Heart left ventricle (tissue), 16 donors: ENCODE measurements at regions of chr9 and their contacts with region 1.

Region 1: DNA sequence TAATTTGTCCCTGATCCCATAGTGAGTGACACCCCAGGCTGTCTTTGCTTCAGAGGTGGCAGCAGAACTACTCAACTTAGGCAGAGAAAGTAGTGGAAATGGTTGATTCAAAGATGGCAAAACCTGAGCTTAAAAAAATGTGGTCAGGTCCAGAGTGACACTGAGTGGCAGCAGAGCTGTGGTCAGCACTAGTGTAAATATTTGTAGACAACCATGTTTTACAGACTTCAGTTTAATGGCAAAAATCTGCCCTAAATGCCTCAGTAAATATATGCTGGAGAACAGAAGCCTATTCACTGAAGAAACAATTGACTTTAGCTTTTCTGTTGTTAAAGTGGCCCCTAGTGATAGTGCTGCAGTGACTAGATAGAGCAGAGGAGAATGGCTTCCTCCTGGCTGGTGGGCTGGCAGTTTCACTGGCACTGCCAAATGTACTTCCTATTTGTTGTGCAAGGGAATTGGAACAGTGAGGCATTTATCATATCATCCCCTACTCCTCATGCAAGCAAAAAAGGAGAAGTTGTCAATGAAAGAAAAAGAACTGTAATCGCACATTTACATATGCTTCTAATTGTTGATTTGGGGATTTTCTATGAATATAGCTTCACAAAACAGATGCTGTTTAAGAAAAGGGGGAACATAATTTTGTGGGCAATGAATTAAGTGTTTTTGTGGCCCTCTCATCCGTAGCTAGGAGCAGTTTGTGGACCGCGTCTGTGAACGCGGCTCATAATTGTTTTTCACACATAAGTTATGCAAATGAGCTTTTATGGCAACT is 12.0 kb downstream of the PBX3 start:
- DNase-seq: peak in 4 of 5 donors; percentile 10 to 33 (median 26)
- ATAC-seq: peak; percentile 30 to 88 (median 63)
- H3K4me3 ChIP-seq: peak overlapping the region in 9 of 12 donors; percentile 16 to 51 (median 30)
- H3K27ac ChIP-seq: peak overlapping the region in 3 of 12 donors; percentile 25 to 64 (median 34)
- H3K4me1 ChIP-seq: peaks cover 5 to 85% (median 47%) of the 10 kb centered on the region in 12 donors
- H3K27me3 ChIP-seq: no peaks in the 10 kb centered on the region
- CTCF ChIP-seq: no peak
- POLR2A ChIP-seq: no peak

Region 2: DNA sequence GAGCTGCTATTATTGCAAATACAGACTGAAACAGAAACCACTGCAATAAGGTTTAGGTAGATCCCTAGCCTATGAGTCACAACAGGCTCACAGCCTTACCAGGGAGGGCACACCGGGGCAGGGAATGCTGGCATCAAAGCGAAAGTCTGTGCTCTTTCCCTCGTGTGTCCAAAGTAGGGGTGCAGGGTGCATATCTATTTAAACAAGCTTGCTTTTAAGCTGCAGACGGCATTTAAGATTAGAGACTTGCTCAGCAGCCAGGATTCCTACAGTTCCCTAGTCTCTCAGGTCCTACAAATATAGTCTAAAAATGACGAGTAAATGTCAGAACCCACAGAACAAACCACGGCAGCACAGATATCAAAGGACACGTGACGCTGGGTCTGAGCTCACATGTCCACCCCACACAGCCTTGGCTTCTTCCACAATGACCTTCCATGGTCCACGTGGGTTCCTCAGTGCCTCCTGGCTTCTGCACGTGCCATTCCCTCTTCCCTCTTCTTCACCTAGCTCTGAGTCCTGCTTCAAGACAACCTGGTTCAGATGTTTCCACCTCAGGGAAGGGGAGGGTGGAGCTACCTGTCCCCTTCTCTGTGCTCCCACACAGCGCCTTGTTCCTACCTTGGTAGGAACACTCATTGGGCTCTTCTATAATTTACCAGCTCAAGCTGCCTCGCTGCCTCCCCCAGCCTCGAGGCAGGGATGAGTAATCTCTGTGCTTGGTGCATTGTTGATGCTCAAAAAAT is 245.3 kb before region 1 on chr9:
- intact Hi-C with region 1: no loop called
- DNase-seq: peak in 4 of 5 donors; percentile 29 to 71 (median 44)
- ATAC-seq: peak; percentile 78 to 94 (median 88)
- H3K4me3 ChIP-seq: peak overlapping the region in 6 of 12 donors; percentile 0 to 38 (median 24)
- H3K27ac ChIP-seq: peak overlapping the region in 11 of 12 donors; percentile 30 to 82 (median 63)
- H3K4me1 ChIP-seq: peaks cover 0 to 49% (median 23%) of the 10 kb centered on the region in 12 donors
- H3K27me3 ChIP-seq: no peaks in the 10 kb centered on the region
- CTCF ChIP-seq: no peak
- POLR2A ChIP-seq: no peak

Region 3: DNA sequence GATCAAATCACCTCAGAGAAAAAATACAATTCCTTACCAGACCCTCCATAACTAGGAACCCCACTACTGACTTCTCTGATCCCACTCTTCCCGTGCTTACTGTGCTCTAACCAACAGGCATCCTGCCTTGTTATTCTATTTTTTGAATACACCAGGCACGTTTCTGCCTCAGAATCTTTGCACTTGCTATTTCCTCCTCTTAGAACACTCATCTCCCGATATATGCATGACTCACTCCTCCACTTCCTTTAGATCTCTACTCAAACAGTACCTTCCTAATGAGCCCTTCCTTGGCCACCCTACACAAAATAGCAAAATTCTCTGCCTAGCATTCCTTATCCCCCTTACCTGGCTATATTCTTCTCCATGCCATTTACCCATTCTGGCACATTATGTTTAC is 96.0 kb before region 1 on chr9:
- intact Hi-C with region 1: no loop called
- DNase-seq: no peak
- ATAC-seq: no peak
- H3K4me3 ChIP-seq: no peak overlapping the region
- H3K27ac ChIP-seq: no peak overlapping the region
- H3K4me1 ChIP-seq: peaks cover 0 to 15% (median 0%) of the 10 kb centered on the region in 12 donors
- H3K27me3 ChIP-seq: no peaks in the 10 kb centered on the region
- CTCF ChIP-seq: no peak
- POLR2A ChIP-seq: no peak

Region 4: DNA sequence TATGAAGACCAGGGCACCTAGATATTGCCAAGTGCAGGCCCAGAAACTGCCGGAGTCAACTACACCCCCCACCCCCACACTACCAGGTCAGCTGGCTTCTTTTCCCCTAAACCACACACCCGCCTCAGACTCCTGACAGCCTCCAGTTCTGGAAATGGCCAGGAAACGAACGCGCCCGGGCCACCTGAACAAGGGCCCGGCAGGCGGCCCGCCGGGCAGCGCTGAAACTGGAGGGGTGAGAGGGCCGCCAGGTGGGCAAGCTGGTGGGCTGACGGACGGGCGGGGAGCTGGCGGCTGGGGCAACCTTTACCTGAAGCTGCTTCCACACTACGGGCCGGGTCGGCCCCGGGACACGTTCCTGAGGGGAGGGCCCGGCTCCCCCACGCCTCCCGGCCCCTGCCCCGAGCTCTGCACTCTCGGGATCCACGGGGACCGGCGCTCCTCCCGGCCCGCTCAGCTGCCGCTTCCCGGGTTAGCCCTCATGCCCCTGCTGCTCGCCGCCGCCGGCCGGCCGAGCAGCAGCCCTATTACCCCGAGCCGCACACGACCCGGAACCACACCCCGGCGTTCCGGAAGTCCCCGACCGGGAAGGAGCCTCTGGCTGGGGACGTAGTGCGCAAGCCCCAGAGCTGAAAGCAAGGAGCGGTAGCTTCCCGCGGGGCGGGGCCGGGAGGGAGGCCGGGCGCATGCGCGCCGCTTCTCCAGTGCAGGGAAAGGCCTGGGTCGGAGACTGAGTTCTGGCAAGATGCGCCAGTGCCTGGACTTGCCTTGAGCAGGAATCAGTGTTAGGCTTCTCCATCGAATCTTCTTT is 52.3 kb before region 1 on chr9 and contains the start of gene MAPKAP1:
- intact Hi-C with region 1: no loop called
- DNase-seq: peak; percentile 96 to 99 (median 99)
- ATAC-seq: peak; percentile 100
- H3K4me3 ChIP-seq: peak within 1 kb of the TSS; percentile 68 to 100 (median 97)
- H3K27ac ChIP-seq: peak within 1 kb of the TSS in 11 of 12 donors; percentile 35 to 88 (median 80)
- H3K4me1 ChIP-seq: peaks cover 0 to 28% (median 20%) of the 10 kb centered on the region in 12 donors
- H3K27me3 ChIP-seq: no peaks in the 10 kb centered on the region
- CTCF ChIP-seq: peak in 1 of 12 donors; percentile 11
- POLR2A ChIP-seq: peak in 1 of 2 donors; percentile 89
- total RNA-seq, gene MAPKAP1: 76.2 to 145 (median 113) TPM

Region 5: GRCh38 chr9:125829743-125830142 is 70.6 kb after region 1 on chr9:
- intact Hi-C with region 1: loop called in 1 of 10 experiments (anchors 10 kb)
- DNase-seq: peak in 2 of 5 donors; percentile 18 to 27
- ATAC-seq: peak; percentile 61 to 81 (median 68)
- H3K4me3 ChIP-seq: peak overlapping the region in 11 of 12 donors; percentile 19 to 62 (median 42)
- H3K27ac ChIP-seq: peak overlapping the region in 7 of 12 donors; percentile 7 to 50 (median 24)
- H3K4me1 ChIP-seq: peaks cover 0 to 19% (median 2%) of the 10 kb centered on the region in 12 donors
- H3K27me3 ChIP-seq: no peaks in the 10 kb centered on the region
- CTCF ChIP-seq: no peak
- POLR2A ChIP-seq: no peak

Region 6: GRCh38 chr9:125889476-125890419 is 130.6 kb after region 1 on chr9:
- intact Hi-C with region 1: loop called in 2 of 10 experiments (anchors 5 to 10 kb)
- DNase-seq: peak; percentile 39 to 62 (median 50)
- ATAC-seq: peak; percentile 53 to 86 (median 74)
- H3K4me3 ChIP-seq: peak overlapping the region; percentile 29 to 69 (median 60)
- H3K27ac ChIP-seq: peak overlapping the region; percentile 3 to 85 (median 72)
- H3K4me1 ChIP-seq: peaks cover 0 to 45% (median 22%) of the 10 kb centered on the region in 12 donors
- H3K27me3 ChIP-seq: peaks cover 0 to 6% (median 0%) of the 10 kb centered on the region in 9 donors
- CTCF ChIP-seq: no peak
- POLR2A ChIP-seq: no peak